Naive thymus-derived CD4-positive, alpha-beta T cell (primary cell): ENCODE measurements at regions of chr12 and their contacts with region 1.

Region 1: DNA sequence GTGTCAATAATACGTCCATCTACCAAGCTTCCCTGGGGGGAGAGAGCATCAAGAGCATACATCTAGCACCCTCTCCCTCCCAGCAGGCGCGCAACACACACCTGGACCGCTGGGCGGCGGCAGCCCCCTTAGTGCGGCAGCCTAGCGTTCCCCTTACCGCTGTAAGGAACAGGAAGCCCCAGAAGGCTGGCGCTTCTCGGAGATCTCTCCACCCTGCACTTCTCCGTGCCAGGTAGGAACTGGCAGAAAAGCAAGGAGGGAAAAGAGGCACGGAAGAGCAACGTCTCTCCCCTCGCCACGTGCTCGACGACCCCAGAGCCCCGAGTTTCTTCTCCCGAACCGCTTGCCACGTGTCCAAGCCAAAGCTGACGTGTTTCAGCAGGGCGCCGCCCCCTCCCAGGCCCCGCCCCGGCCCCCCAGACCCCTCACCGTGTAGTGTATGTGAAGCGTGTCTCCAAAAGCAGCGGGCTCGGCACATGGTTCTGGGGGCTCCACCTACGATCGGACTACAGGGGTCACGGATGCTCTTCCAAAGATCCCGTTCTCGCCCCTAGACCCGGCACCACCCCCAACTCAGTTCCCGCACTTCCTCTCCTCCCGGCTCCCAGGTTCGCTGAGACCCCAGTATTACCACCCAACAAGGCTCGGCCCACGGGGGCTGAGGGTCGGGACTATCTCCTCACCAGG is 532 bp downstream of the FKBP11 start:
- DNase-seq: peak; percentile 56 to 80 (median 77)
- ATAC-seq: peak; percentile 86
- H3K4me3 ChIP-seq: peak overlapping the region; percentile 72
- H3K4me3 Mint-ChIP-seq: peak overlapping the region; percentile 89 to 98 (median 93)
- H3K27ac ChIP-seq: peak overlapping the region; percentile 99
- H3K27ac Mint-ChIP-seq: peak overlapping the region; percentile 74 to 98 (median 95)
- H3K4me1 ChIP-seq: peaks cover 10 to 18% of the 10 kb centered on the region in 2 donors
- H3K4me1 Mint-ChIP-seq: peaks cover 18 to 52% (median 42%) of the 10 kb centered on the region in 7 donors
- H3K27me3 ChIP-seq: no peaks in the 10 kb centered on the region
- H3K27me3 Mint-ChIP-seq: no peaks in the 10 kb centered on the region

Region 2: DNA sequence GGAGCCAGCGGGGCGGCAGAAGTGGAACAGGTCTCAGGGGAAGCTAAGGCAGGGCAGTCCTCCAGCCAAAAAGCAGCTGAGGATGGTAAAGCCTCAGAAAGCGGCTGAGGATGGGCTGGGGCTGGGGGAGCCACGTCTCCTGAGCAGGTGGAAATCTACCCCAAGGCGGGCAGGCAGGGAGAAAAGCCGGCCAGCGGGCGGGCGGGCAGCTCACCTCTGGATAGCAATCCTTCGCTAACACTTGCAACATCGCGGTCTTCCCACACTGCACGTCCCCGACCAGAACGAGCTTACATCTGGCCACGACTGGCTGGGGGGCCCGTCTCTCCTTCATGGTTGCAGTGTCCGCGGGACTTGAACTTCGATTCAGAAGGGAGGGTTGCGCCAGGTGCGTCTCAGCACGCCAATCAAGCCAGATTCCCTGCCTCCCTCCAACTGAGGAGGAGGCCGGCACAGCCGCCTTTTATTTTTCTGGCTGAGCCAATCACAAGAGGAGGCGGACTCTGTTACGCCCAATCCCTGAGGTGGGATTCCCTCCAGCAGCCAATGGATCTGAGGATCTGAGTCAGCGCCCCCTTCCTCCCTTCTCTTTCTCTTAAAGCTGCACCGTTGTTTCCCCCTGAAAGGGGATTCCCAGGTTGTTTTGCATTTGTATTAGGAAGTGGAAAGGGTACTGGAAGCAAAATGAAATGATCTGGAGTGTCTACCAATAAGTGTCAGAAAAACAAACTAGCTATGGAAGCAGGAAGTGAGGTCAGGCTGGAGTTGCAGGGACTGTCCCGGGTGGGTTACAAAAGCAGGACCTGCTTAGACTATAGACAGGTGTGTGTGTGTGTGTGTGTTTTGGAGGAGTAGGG is 59.1 kb before region 1 on chr12 and contains the start of gene RND1:
- CTCF ChIA-PET with region 1: no interaction called
- POLR2A ChIA-PET with region 1: no interaction called
- intact Hi-C with region 1: loop called in 1 of 2 experiments (anchors 2 kb)
- DNase-seq: peak; percentile 50 to 92 (median 82)
- ATAC-seq: peak; percentile 96
- H3K4me3 ChIP-seq: peak within 1 kb of the TSS; percentile 69
- H3K4me3 Mint-ChIP-seq: peak within 1 kb of the TSS; percentile 87 to 95 (median 94)
- H3K27ac ChIP-seq: peak within 1 kb of the TSS; percentile 62
- H3K27ac Mint-ChIP-seq: peak within 1 kb of the TSS; percentile 66 to 96 (median 85)
- H3K4me1 ChIP-seq: peaks cover 10 to 11% of the 10 kb centered on the region in 2 donors
- H3K4me1 Mint-ChIP-seq: peaks cover 15 to 28% (median 25%) of the 10 kb centered on the region in 7 donors
- H3K27me3 ChIP-seq: no peaks in the 10 kb centered on the region
- H3K27me3 Mint-ChIP-seq: peaks cover 23 to 40% (median 28%) of the 10 kb centered on the region in 5 donors
- total RNA-seq, gene RND1: 1.1 to 13.5 (median 2.3) TPM

Region 3: DNA sequence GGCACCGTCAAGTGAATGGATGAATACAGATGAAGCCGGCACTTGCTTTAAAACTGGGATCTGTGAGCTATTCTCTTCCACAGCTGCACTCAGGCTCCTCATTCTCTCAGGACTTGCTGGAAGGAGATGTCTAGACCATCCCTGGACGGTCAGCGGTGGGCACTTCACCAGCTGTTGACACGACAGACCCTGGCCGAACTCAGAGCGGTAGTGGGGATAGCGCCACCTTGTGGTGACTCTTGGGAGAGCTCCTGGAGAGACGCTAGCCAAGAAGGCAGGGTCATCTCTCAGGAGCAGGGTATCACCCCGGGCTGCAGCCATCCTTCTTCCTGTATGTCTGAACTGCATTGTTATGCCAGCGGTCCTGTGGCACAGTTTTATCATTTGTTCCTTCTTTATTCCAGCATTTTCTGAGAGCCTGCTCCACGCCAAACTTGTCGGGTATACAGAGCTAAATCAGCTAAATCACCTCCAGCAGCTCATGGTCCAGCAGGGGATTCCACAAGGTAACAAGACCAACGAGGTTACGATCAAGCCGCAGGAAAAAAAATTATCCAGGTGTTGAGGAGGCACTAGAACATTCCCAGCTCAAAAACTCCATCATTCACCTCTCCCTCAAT is 63.4 kb after region 1 on chr12:
- CTCF ChIA-PET with region 1: interaction called, 6 read pairs
- POLR2A ChIA-PET with region 1: interaction called, 3 read pairs
- intact Hi-C with region 1: loop called (anchors 1 to 5 kb)
- DNase-seq: peak in 8 of 9 donors; percentile 45 to 82 (median 60)
- ATAC-seq: peak; percentile 90
- H3K4me3 ChIP-seq: no peak overlapping the region
- H3K4me3 Mint-ChIP-seq: no peak overlapping the region
- H3K27ac ChIP-seq: no peak overlapping the region
- H3K27ac Mint-ChIP-seq: no peak overlapping the region
- H3K4me1 ChIP-seq: no peaks in the 10 kb centered on the region
- H3K4me1 Mint-ChIP-seq: peaks cover 0 to 12% (median 8%) of the 10 kb centered on the region in 7 donors
- H3K27me3 ChIP-seq: no peaks in the 10 kb centered on the region
- H3K27me3 Mint-ChIP-seq: peaks cover 21 to 79% (median 31%) of the 10 kb centered on the region in 5 donors

Region 4: DNA sequence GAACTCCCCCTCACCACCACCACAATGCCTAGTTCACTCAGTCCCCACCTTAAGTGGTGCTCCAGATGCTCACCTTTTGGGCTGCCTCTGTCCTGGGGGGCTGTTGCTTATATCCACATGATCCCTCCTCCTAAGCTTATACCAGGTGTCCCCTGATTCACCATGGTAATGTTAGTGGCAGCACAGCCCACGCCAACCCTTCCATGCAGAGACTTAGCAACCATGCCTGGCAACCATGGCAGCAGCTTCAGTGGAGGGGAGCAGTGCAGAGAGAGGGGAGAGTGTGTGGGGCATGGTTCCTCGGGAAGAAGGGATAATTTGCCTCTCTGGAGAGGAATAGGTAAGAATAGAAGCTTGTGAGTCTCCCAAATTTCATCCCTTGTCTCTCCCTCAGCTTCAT is 75.6 kb after region 1 on chr12:
- CTCF ChIA-PET with region 1: no interaction called
- POLR2A ChIA-PET with region 1: no interaction called
- intact Hi-C with region 1: no loop called
- DNase-seq: no peak
- ATAC-seq: no peak
- H3K4me3 ChIP-seq: no peak overlapping the region
- H3K4me3 Mint-ChIP-seq: peak overlapping the region in 6 of 10 donors; percentile 7 to 80 (median 62)
- H3K27ac ChIP-seq: no peak overlapping the region
- H3K27ac Mint-ChIP-seq: no peak overlapping the region
- H3K4me1 ChIP-seq: peaks cover 13 to 23% of the 10 kb centered on the region in 2 donors
- H3K4me1 Mint-ChIP-seq: peaks cover 19 to 40% (median 30%) of the 10 kb centered on the region in 7 donors
- H3K27me3 ChIP-seq: peaks cover 0 to 27% of the 10 kb centered on the region in 2 donors
- H3K27me3 Mint-ChIP-seq: peaks cover 42 to 49% (median 46%) of the 10 kb centered on the region in 5 donors

Region 5: DNA sequence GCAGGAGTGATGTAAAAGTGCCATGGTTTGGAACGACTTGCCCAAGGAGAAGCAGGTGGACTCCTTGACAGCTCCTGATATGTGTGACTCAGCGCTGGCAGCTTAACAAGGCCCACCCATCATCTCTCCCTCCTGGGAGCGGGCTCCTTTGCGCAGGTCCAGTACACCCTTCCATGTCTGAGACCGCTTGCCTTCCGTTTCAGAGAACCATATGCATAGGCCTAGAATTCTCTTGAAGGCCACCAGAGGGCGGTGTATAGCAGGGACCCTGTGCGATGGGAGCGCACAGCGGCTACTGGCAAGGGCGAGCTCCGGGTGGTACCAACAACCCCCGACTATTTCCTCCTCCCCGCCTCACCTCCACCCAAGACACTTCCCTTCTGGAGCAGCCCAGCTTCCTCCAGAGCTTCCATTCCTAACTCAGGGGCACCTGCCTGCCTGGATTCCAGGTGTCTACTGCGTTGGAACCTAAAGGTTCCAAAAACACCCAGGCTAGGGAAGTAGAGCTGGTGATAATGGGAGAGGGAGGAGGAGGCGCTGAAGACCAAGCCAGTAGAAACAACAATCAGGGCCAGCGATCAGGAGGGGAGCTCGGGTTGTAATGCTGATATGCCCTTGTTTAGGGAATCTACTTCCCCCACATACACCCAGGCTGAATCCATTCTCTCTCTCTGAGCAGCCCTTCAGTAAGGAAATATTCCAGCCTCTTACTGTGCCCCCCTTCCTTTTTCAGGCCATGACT is 163.6 kb after region 1 on chr12:
- CTCF ChIA-PET with region 1: no interaction called
- POLR2A ChIA-PET with region 1: no interaction called
- intact Hi-C with region 1: no loop called
- DNase-seq: peak; percentile 39 to 73 (median 70)
- ATAC-seq: peak; percentile 94
- H3K4me3 ChIP-seq: no peak overlapping the region
- H3K4me3 Mint-ChIP-seq: peak overlapping the region in 7 of 10 donors; percentile 11 to 59 (median 48)
- H3K27ac ChIP-seq: no peak overlapping the region
- H3K27ac Mint-ChIP-seq: peak overlapping the region in 2 of 9 donors; percentile 5 to 34
- H3K4me1 ChIP-seq: peaks cover 35 to 40% of the 10 kb centered on the region in 2 donors
- H3K4me1 Mint-ChIP-seq: peaks cover 22 to 53% (median 38%) of the 10 kb centered on the region in 7 donors
- H3K27me3 ChIP-seq: peaks cover 14 to 37% of the 10 kb centered on the region in 2 donors
- H3K27me3 Mint-ChIP-seq: peaks cover 32 to 58% (median 49%) of the 10 kb centered on the region in 5 donors